ENCODE measurements at regions of chr13 and their contacts with region 1.

Region 1: GRCh38 chr13:36275190-36276002 is 22.2 kb downstream of the CCDC169 start:
- DNase-seq: peak; percentile 64
- H3K4me3 Mint-ChIP-seq: no peak overlapping the region
- H3K27ac Mint-ChIP-seq: no peak overlapping the region
- H3K4me1 Mint-ChIP-seq: no peaks in the 10 kb centered on the region
- H3K27me3 Mint-ChIP-seq: peaks cover 15% of the 10 kb centered on the region

Region 2: GRCh38 chr13:35978603-35979316 is 296.6 kb before region 1 on chr13:
- intact Hi-C with region 1: loop called (anchors 1 kb)
- DNase-seq: peak; percentile 77
- H3K4me3 Mint-ChIP-seq: no peak overlapping the region
- H3K27ac Mint-ChIP-seq: no peak overlapping the region
- H3K4me1 Mint-ChIP-seq: no peaks in the 10 kb centered on the region
- H3K27me3 Mint-ChIP-seq: no peaks in the 10 kb centered on the region